ENCODE measurements at regions of chr5 and their contacts with region 1.

Region 1: DNA sequence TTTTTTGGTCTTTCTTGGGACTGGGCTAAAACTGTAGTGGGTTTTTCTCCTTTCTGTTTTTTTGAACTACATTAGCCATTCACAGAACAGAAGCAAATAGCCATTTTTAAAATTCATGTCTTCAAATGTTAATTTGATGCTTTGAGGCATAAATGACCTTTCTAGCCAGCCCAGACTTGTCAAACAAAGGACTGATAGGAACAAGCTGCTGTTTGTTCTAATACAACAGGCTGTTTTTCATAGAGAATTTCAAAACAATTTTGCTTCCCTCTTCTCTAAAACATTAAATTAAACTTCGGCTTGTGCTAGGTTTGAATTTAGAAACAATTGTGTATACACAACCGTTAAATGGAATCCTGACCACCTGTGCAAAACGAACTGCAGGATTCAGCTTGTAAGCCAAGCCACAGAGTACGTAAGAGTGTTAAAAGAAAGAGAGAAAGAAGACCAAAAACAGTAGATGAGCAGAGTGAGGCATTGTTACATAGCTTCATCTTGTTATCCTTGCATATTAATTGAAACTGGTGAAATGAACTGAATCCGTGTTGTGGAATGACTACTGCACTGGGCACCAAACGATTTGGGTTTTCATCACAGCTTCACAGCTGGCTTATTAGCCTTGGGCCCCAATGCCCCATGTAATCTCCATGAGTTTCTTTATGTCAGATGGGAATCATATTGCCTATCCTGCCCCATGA is 100.0 kb downstream of the ZSWIM6 start:
- DNase-seq: no peak
- H3K4me3 ChIP-seq: peak overlapping the region in 45 of 59 donors; percentile 1 to 49 (median 24)
- H3K27ac ChIP-seq: peak overlapping the region; percentile 14 to 95 (median 85)
- H3K27me3 ChIP-seq: no peaks in the 10 kb centered on the region
- CTCF ChIP-seq: peak in 1 of 56 donors; percentile 10

Region 2: GRCh38 chr5:61301341-61302199 is 130.5 kb before region 1 on chr5:
- intact Hi-C with region 1: no loop called
- DNase-seq: peak in 4 of 10 donors; percentile 22 to 62 (median 48)
- H3K4me3 ChIP-seq: peak overlapping the region in 4 of 59 donors; percentile 4 to 26 (median 6)
- H3K27ac ChIP-seq: peak overlapping the region in 40 of 59 donors; percentile 2 to 79 (median 50)
- H3K27me3 ChIP-seq: no peaks in the 10 kb centered on the region
- CTCF ChIP-seq: no peak

Region 3: DNA sequence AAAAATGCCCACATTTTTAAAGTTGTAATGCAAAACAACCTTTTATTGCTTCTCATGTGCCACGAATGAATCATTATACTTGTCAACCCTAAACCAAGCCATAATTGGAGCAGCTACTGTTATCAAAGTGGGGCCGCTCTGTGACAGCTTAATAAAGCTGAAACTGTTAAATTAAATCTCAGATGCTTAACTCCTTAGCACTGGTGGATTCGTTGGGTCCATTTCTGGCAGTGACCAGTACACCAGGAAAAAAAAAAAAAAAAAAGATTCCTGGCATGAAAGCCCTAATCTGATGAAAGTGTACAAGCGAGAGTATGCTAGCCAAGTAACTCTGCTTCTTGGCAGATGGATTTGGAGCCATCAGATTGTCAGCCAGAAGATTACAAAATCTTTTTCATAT is 64.8 kb after region 1 on chr5:
- intact Hi-C with region 1: loop called in 1 of 2 experiments (anchors 10 kb)
- DNase-seq: no peak
- H3K4me3 ChIP-seq: peak overlapping the region in 6 of 59 donors; percentile 2 to 25 (median 17)
- H3K27ac ChIP-seq: peak overlapping the region in 48 of 59 donors; percentile 5 to 82 (median 54)
- H3K27me3 ChIP-seq: no peaks in the 10 kb centered on the region
- CTCF ChIP-seq: peak in 1 of 56 donors; percentile 7

Region 4: GRCh38 chr5:61603211-61603908 is 171.3 kb after region 1 on chr5:
- intact Hi-C with region 1: loop called in 1 of 2 experiments (anchors 10 kb)
- DNase-seq: peak in 9 of 10 donors; percentile 59 to 82 (median 78)
- H3K4me3 ChIP-seq: peak overlapping the region in 1 of 59 donors; percentile 18
- H3K27ac ChIP-seq: peak overlapping the region in 16 of 59 donors; percentile 3 to 70 (median 38)
- H3K27me3 ChIP-seq: no peaks in the 10 kb centered on the region
- CTCF ChIP-seq: peak in 51 of 56 donors; percentile 19 to 73 (median 47)